Cardiac septum (tissue), 1 donor: ENCODE measurements at regions of chr10 and their contacts with region 1.

Region 1: GRCh38 chr10:27446091-27446918 is 57.8 kb upstream of the RAB18 start:
- DNase-seq: no peak

Region 2: DNA sequence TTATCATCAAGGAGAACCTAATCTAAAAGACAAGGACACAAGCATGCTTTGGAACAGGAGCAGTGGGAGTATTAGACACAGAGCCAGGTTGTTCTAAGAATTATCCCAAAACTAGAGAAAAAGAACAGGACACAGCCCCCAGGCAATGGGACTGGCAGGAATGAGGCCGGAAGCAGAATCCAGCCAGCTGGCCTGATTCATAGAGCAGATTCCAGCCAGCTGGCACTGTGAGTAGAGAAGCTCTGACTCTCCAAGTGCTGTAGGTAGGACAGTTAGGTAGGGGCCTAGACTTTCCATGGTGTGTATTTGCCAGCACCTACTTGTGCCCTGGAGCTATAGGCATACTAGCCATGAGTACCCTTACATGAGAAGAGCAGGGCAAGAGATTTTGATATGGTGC is 44.5 kb after region 1 on chr10:
- intact Hi-C with region 1: no loop called
- DNase-seq: no peak

Region 3: GRCh38 chr10:28393966-28394568 is 947.8 kb after region 1 on chr10:
- intact Hi-C with region 1: loop called (anchors 10 kb)
- DNase-seq: no peak